ENCODE measurements at regions of chr15 and their contacts with region 1.

Region 1: DNA sequence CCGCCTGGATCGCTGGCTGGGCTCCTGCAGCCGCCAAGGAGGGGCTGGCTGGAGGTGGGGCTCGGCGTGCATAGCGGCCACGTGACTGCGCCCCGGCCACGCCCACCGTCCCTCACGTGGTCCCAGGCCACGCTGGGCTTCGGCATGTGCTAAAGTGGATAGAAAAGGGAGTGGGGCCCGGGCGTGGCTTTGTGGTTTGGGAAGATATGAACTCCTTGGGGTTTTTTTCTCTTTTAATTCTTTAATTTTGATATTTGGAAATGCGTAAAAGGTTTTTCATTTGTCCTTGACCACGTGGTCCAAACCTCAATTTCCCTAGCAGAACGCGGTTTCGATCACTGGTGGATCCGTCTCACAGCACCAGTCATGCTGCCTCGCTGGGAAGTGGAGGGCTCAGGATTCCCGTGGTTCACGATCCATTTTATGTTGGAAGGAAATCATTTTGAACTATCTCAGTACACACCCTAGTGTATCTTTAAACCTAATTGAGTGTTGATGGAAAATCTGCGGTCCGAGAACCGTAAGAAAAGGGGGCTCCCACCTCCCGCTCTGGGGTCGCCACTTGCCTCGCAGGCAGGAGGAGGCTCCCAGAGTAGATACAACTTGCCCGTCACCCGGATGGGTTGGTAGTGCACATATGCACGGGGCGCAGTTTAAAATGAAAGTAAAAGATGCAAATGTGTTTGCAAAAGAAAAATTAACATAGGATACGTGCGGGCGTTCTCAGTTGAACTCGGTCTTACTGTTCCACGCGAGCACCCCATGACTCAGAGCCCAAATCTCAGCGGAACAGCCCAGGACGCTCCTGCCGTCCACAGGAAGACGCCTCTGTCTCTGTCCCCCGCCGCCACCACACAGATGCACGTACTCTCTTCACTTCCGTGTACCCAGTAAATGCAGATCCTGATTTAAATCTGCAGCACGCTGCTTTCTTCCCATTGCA is 141.9 kb downstream of the PGPEP1L start:
- DNase-seq: peak; percentile 79 to 90 (median 84)
- ATAC-seq: peak; percentile 79 to 93 (median 92)
- H3K4me3 ChIP-seq: peak overlapping the region; percentile 21 to 79 (median 57)
- H3K27ac ChIP-seq: peak overlapping the region in 11 of 12 donors; percentile 40 to 88 (median 62)
- H3K4me1 ChIP-seq: peaks cover 0 to 67% (median 32%) of the 10 kb centered on the region in 12 donors
- H3K27me3 ChIP-seq: no peaks in the 10 kb centered on the region
- CTCF ChIP-seq: no peak
- POLR2A ChIP-seq: no peak

Region 2: DNA sequence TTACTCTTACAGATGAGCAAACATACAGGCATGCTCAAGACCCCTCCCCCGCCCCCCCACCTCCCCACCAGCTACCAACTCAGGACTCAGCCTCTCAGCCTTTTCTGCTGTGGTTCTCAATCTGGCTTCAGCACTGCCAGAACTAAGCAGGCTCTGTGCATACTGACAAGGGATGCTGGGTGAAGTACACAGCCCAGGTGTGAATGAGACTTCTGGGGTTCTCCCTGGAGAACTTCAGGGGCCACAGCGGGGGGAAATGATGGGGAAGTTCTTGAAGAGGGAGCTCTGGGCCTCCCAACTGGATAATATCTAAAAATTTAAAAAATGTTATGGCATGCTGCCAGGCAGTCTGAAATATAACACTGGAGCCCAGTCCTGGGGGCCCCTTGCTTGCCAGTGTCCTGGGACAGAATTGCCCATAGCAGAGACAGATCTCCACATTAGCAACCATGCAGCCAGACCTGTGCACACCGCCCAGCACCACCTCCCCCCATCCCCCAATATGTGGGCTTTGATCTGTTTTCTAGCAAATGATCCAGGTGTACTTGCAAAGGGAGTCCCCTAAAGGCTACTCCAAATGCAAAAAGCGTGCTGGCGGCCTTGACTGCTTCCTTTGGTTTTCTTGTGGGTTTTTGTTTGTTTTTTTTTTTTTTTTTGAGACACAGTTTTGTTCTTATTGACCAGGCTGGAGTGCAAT is 100.6 kb after region 1 on chr15:
- intact Hi-C with region 1: no loop called
- DNase-seq: no peak
- ATAC-seq: no peak
- H3K4me3 ChIP-seq: no peak overlapping the region
- H3K27ac ChIP-seq: no peak overlapping the region
- H3K4me1 ChIP-seq: peaks cover 0 to 4% (median 0%) of the 10 kb centered on the region in 12 donors
- H3K27me3 ChIP-seq: no peaks in the 10 kb centered on the region
- CTCF ChIP-seq: no peak
- POLR2A ChIP-seq: no peak

Region 3: DNA sequence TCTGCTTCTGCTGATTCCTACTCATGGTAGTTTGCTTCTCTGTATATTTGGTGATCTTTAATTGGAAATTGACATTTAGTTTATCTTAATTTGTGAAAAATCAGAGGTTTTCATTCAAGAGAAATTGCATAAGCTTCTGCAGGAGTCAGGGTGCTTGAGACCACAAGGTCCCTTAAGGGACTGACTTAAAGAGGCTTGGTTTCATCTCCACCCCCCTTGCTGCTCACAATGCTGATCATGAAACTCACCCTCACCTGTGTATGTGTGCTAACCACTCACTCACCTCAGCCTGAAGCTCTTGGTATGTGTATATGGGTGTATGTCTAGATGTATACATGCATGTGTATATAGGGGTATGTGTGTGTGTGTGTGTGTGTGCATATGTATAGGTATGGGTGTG is 130.5 kb after region 1 on chr15:
- intact Hi-C with region 1: no loop called
- DNase-seq: no peak
- ATAC-seq: no peak
- H3K4me3 ChIP-seq: no peak overlapping the region
- H3K27ac ChIP-seq: no peak overlapping the region
- H3K4me1 ChIP-seq: no peaks in the 10 kb centered on the region
- H3K27me3 ChIP-seq: no peaks in the 10 kb centered on the region
- CTCF ChIP-seq: no peak
- POLR2A ChIP-seq: no peak

Region 4: DNA sequence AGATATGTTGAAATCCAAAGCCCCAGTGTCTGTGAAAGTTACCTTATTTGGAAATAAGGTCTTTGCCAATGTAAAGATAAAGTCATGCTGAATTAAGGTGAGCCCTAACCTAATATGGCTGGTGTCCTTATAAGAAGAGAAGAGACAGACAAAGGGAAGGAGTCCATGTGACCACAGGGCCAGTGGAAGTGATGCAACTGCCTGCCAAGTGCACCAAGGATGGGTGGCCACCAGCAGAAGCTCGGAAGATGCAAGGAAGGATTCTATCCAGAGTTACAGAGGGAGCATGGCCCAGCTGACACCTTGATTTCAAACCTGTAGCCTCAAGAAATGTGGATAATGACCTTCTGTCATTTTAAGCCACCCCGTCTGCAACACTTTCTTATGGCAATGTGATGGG is 177.2 kb after region 1 on chr15:
- intact Hi-C with region 1: loop called in 1 of 10 experiments (anchors 10 kb)
- DNase-seq: no peak
- ATAC-seq: no peak
- H3K4me3 ChIP-seq: no peak overlapping the region
- H3K27ac ChIP-seq: no peak overlapping the region
- H3K4me1 ChIP-seq: no peaks in the 10 kb centered on the region
- H3K27me3 ChIP-seq: no peaks in the 10 kb centered on the region
- CTCF ChIP-seq: no peak
- POLR2A ChIP-seq: no peak

Measured in heart left ventricle (tissue), 16 donors.